Kidney (tissue), 22 donors: ENCODE measurements at regions of chr11 and their contacts with region 1.

Region 1: DNA sequence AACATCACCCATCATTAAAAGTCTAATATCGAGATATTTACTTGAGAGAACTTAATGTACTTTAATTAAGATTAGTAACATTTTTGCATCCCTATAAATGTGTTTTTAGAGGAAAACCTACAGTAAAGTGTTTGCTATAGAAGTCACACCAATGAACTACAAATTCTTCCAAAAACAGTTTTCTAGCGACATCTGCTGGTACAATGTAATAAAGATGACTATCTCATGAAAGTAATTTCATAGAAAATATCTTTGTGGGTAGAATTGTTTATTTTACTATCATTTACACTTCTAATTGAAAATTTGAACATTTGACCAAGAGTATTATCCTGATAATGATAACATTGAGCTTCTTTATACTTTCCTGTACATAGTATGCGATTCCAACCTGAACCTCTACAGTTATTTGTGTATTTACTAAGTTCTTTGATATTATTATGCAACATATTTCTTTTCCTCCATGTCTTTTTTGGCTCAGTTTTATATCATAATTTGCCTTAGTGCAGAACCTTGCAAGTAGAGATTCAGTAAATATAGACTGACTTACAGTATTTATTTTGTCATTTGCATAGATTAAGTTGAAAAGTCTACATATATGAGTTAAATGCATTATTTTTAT is 252.7 kb downstream of the TMEM135 start:
- DNase-seq: peak in 2 of 5 donors; percentile 81 to 85
- H3K4me3 ChIP-seq: no peak overlapping the region
- H3K27ac ChIP-seq: no peak overlapping the region
- H3K4me1 ChIP-seq: no peaks in the 10 kb centered on the region
- H3K27me3 ChIP-seq: no peaks in the 10 kb centered on the region
- CTCF ChIP-seq: peak; percentile 68

Region 2: GRCh38 chr11:86869966-86870570 is 420.3 kb before region 1 on chr11:
- intact Hi-C with region 1: loop called (anchors 10 kb)
- DNase-seq: peak in 4 of 5 donors; percentile 51 to 87 (median 64)
- H3K4me3 ChIP-seq: no peak overlapping the region
- H3K27ac ChIP-seq: no peak overlapping the region
- H3K4me1 ChIP-seq: no peaks in the 10 kb centered on the region
- H3K27me3 ChIP-seq: no peaks in the 10 kb centered on the region
- CTCF ChIP-seq: peak; percentile 73

Region 3: GRCh38 chr11:86938900-86939880 is 351.2 kb before region 1 on chr11:
- intact Hi-C with region 1: loop called (anchors 5 kb)
- DNase-seq: peak in 2 of 5 donors; percentile 82 to 90
- H3K4me3 ChIP-seq: peak overlapping the region in 1 of 3 donors; percentile 61
- H3K27ac ChIP-seq: peak overlapping the region; percentile 89 to 91
- H3K4me1 ChIP-seq: peaks cover 32 to 58% (median 38%) of the 10 kb centered on the region in 3 donors
- H3K27me3 ChIP-seq: no peaks in the 10 kb centered on the region
- CTCF ChIP-seq: peak; percentile 92

Region 4: DNA sequence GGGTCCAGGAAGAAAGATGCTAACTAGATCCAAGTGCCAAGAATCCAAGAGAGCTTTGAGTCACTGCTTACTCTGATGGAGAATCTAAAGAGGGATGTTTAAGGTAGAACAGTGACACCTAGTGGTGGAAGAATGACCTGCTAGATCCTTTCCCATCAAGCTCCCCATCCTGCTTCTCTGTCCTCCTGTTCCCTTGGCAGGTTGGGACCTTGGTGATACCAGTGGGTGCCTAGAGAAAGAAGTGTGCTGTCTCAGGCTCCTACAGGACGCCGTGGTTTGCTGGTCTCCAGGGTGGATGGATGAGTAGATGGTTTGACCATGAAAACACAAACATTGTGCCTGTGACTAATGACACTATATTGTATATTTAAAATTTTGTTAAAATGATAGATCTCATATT is 131.0 kb after region 1 on chr11:
- intact Hi-C with region 1: no loop called
- DNase-seq: peak in 3 of 5 donors; percentile 56 to 87 (median 82)
- H3K4me3 ChIP-seq: no peak overlapping the region
- H3K27ac ChIP-seq: no peak overlapping the region
- H3K4me1 ChIP-seq: peaks cover 0 to 2% (median 0%) of the 10 kb centered on the region in 3 donors
- H3K27me3 ChIP-seq: no peaks in the 10 kb centered on the region
- CTCF ChIP-seq: peak; percentile 75